ENCODE measurements at regions of chr1 and their contacts with region 1.

Region 1: GRCh38 chr1:24070821-24071393 is 41.0 kb downstream of the MYOM3 start:
- DNase-seq: peak; percentile 76 to 84
- H3K4me3 ChIP-seq: no peak overlapping the region
- H3K27ac ChIP-seq: no peak overlapping the region
- H3K4me1 ChIP-seq: peaks cover 0 to 6% (median 2%) of the 10 kb centered on the region in 4 donors
- H3K27me3 ChIP-seq: no peaks in the 10 kb centered on the region
- CTCF ChIP-seq: peak; percentile 81 to 90

Region 2: GRCh38 chr1:24108334-24109165 is 37.6 kb after region 1 on chr1:
- intact Hi-C with region 1: loop called (anchors 5 kb)
- DNase-seq: peak in 1 of 2 donors; percentile 34
- H3K4me3 ChIP-seq: no peak overlapping the region
- H3K27ac ChIP-seq: peak overlapping the region; percentile 9 to 35
- H3K4me1 ChIP-seq: peaks cover 0 to 35% (median 29%) of the 10 kb centered on the region in 4 donors
- H3K27me3 ChIP-seq: no peaks in the 10 kb centered on the region
- CTCF ChIP-seq: no peak

Measured in tibial artery (tissue), 4 donors.